Activated CD4-positive, alpha-beta memory T cell treated with anti-CD3 and anti-CD28 coated beads for 36 hours (primary cell): ENCODE measurements at regions of chr3 and their contacts with region 1.

Region 1: DNA sequence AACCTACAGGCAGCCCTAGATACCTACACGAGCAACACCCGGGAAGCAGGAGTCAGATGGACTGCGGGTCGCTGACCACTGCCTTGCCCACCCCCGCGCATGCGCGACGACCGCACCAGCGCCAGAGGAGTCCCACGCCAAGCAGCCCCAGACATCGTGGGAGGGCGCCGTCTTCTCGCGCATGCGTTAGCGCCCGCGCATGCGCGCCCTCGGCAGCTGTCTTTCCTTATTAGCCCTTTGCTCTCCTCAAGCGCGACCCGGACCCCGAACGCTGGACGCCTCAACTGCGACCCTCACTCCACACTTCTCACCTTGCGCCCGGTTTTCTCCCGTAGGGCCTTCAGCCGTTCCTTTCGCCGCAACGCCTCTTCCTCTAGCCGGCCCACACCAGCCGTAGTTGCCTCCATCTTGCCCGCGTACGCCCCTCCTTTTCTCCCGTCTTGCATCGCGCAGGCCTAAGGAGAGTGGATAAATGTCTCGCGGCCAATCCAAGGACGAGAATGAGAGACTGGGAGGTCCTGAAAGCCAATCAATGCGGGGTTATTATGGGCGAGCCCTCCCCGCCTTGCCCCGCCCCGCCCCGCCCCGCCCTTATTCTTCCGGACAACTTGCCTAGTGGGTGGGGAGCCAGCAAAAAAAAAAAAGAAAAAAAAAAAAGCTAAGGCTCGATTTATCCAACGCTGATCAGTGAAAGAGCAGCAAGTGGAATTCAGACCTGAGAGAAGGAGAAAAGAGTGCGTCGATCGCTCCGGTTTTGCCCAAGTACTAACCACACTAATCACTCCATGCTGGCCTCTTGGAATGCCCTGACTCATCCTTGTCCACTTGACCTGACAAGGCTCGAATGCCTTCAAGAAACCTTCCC is at the start of gene CCDC12:
- DNase-seq: peak; percentile 97
- H3K4me3 Mint-ChIP-seq: peak within 1 kb of the TSS; percentile 92
- H3K27ac Mint-ChIP-seq: peak within 1 kb of the TSS; percentile 97
- H3K4me1 Mint-ChIP-seq: peaks cover 57% of the 10 kb centered on the region
- H3K27me3 Mint-ChIP-seq: no peaks in the 10 kb centered on the region
- total RNA-seq, gene CCDC12: 44.3 to 49.9 TPM

Region 2: GRCh38 chr3:46923559-46924350 is 52.8 kb before region 1 on chr3:
- CTCF ChIA-PET with region 1: interaction called, 4 read pairs
- POLR2A ChIA-PET with region 1: no interaction called
- intact Hi-C with region 1: loop called (anchors 10 kb)
- DNase-seq: peak; percentile 55
- H3K4me3 Mint-ChIP-seq: no peak overlapping the region
- H3K27ac Mint-ChIP-seq: no peak overlapping the region
- H3K4me1 Mint-ChIP-seq: peaks cover 27% of the 10 kb centered on the region
- H3K27me3 Mint-ChIP-seq: no peaks in the 10 kb centered on the region

Region 3: DNA sequence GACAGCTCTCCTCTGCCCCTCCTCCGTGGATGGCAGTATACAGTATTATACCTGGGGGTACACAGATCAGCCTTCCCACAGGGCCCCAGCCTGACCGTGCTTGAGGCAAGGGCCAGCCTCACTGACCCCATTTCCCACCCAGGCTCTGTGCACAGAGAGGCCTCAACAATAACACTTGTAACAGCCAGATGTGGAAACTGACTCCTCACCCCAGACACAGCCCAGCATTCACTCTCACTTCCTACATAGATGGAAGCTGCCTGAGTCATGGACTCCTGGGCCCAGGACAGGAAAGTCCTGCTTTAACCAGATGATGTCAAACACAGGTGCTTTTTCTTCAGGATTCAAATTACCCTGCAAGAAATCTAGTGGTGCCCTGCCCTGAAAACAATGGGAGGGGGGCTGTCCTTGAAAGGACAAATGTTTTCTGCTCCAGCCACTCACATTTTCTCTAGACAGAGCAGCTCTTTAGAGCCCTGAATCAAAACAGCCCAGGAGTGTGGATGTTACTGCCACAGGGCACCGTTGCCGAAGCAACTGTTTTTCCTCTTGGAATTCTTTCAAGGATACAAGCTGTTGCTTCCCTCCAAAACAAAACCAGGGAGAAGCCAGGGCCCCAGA is 16.4 kb before region 1 on chr3:
- CTCF ChIA-PET with region 1: interaction called, 3 read pairs
- POLR2A ChIA-PET with region 1: interaction called, 27 read pairs
- intact Hi-C with region 1: loop called (anchors 1 kb)
- DNase-seq: peak; percentile 38
- H3K4me3 Mint-ChIP-seq: no peak overlapping the region
- H3K27ac Mint-ChIP-seq: peak overlapping the region; percentile 92
- H3K4me1 Mint-ChIP-seq: peaks cover 80% of the 10 kb centered on the region
- H3K27me3 Mint-ChIP-seq: no peaks in the 10 kb centered on the region

Region 4: DNA sequence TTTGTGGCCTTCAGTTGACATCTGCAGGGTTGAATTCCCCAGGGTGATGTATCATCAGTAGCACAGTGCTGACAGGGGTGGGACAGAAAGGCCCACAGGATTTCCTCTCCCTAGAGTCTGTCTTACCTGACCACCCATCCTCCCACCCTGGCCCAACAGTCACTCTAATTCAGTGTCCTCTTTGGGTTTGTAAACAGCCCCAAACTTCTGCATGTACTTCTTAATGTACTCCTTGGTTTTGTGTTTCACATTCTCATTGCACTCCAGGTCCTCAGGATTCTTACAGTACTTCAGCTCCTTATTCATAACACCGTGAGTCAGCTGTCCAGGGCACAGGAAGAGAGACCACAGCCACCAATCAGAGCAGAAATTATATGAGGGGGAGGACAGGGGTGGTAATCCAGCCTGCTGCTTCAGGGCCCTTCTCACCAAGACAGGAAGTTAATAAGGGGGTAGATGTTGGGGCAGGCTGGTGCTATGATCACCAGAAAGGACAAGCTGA is 40.4 kb after region 1 on chr3:
- CTCF ChIA-PET with region 1: interaction called, 3 read pairs
- POLR2A ChIA-PET with region 1: interaction called, 3 read pairs
- intact Hi-C with region 1: loop called (anchors 5 kb)
- DNase-seq: peak; percentile 71
- H3K4me3 Mint-ChIP-seq: peak overlapping the region; percentile 8
- H3K27ac Mint-ChIP-seq: peak overlapping the region; percentile 92
- H3K4me1 Mint-ChIP-seq: peaks cover 47% of the 10 kb centered on the region
- H3K27me3 Mint-ChIP-seq: no peaks in the 10 kb centered on the region

Region 5: GRCh38 chr3:47282424-47283192 is 306.1 kb after region 1 on chr3 and contains the starts of genes KIF9 and KLHL18:
- CTCF ChIA-PET with region 1: no interaction called
- POLR2A ChIA-PET with region 1: no interaction called
- intact Hi-C with region 1: loop called (anchors 5 kb)
- DNase-seq: peak; percentile 97
- H3K4me3 Mint-ChIP-seq: peak within 1 kb of the TSS; percentile 98
- H3K27ac Mint-ChIP-seq: peak within 1 kb of the TSS; percentile 100
- H3K4me1 Mint-ChIP-seq: peaks cover 39% of the 10 kb centered on the region
- H3K27me3 Mint-ChIP-seq: peaks cover 3% of the 10 kb centered on the region
- total RNA-seq, gene KIF9: 3.3 to 4.9 TPM
- total RNA-seq, gene KLHL18: 21.2 to 23.7 TPM

Region 6: DNA sequence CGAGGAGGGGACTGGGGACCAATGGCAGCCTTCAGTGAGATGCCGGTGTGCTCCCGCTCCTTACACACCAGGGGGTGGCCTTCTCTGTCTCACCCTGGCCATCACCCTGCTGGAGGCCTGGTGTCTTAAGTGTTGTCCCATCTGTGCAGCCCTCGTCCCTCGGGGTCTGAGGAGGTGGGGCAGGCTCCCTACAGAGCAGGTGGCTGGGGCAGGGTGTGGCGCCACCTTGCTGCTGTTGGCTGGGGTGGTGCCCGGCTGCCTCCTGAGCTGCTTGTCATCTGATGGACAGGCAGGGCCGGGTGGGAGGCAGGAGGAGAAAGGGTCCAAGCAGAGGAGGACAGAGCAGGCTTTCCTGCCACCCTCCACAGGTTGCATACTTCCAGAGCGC is 430.2 kb after region 1 on chr3:
- CTCF ChIA-PET with region 1: no interaction called
- POLR2A ChIA-PET with region 1: no interaction called
- intact Hi-C with region 1: no loop called
- DNase-seq: no peak
- H3K4me3 Mint-ChIP-seq: no peak overlapping the region
- H3K27ac Mint-ChIP-seq: no peak overlapping the region
- H3K4me1 Mint-ChIP-seq: no peaks in the 10 kb centered on the region
- H3K27me3 Mint-ChIP-seq: no peaks in the 10 kb centered on the region

Region 7: GRCh38 chr3:47513125-47513929 is 536.8 kb after region 1 on chr3 and contains the start of gene ELP6:
- CTCF ChIA-PET with region 1: no interaction called
- POLR2A ChIA-PET with region 1: no interaction called
- intact Hi-C with region 1: loop called (anchors 1 kb)
- DNase-seq: peak; percentile 98
- H3K4me3 Mint-ChIP-seq: peak within 1 kb of the TSS; percentile 97
- H3K27ac Mint-ChIP-seq: peak within 1 kb of the TSS; percentile 98
- H3K4me1 Mint-ChIP-seq: peaks cover 20% of the 10 kb centered on the region
- H3K27me3 Mint-ChIP-seq: no peaks in the 10 kb centered on the region
- total RNA-seq, gene ELP6: 32.7 to 32.8 TPM